ENCODE measurements at regions of chr14 and their contacts with region 1.

Region 1: GRCh38 chr14:39368261-39368959 is 63.8 kb downstream of the FBXO33 start:
- DNase-seq: peak; percentile 61
- H3K4me3 ChIP-seq: no peak overlapping the region
- H3K27ac ChIP-seq: no peak overlapping the region
- H3K4me1 ChIP-seq: no peaks in the 10 kb centered on the region
- H3K27me3 ChIP-seq: no peaks in the 10 kb centered on the region
- CTCF ChIP-seq: peak; percentile 36 to 42
- POLR2A ChIP-seq: no peak

Region 2: DNA sequence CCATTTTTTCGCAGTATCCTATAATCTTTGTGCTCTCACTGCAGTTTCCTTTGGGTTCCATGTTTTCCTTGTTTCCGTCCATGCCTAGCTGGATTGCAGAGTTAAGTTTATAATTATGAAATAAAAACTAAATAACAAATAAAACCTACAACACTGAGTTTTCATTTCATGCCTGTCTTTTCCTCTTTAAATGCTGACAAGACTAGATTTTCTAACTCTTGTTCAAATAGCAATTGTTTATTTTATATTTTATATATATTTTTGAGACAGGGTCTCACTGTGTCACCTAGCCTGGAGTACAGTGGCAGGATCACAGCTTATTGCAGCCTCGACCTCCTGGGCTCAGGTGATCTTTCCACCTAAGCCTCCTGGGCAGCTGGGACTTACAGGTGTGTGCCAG is 259.6 kb before region 1 on chr14:
- CTCF ChIA-PET with region 1: interaction called, 18 read pairs
- POLR2A ChIA-PET with region 1: no interaction called
- dilution Hi-C with region 1: no loop called
- intact Hi-C with region 1: loop called (anchors 1 kb)
- DNase-seq: no peak
- H3K4me3 ChIP-seq: no peak overlapping the region
- H3K27ac ChIP-seq: no peak overlapping the region
- H3K4me1 ChIP-seq: peaks cover 6% of the 10 kb centered on the region
- H3K27me3 ChIP-seq: no peaks in the 10 kb centered on the region
- CTCF ChIP-seq: no peak
- POLR2A ChIP-seq: no peak

Region 3: DNA sequence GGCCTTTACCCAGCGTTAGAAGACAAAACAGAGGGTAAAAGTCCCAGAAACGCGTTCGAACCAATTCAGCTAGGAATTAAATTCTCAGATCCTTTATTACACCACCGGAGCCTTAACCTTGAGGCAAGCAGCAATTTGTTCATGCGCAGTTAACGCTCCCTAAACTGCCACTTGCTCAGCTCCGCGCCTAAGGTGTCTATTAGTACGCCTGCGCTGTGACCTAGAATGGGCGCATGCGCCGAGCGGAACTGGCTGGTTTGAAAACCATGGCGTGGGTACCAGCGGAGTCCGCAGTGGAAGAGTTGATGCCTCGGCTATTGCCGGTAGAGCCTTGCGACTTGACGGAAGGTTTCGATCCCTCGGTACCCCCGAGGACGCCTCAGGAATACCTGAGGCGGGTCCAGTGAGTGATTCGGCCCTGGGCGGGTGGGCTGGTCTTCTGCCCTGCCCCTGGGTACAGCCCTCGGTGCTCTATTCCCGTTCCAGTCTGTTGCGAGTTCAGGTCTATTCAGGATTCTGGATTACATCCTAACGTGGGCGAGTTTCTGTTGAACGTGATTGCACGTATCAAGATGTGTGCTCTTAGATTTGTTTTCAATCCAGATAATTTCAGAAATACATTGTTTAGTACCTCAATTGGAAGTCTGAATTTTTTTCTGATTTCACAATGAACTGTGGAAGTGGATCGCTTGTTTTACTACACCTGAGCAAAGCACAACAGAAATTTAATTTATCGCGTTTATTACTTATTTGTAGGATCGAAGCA is 254.2 kb before region 1 on chr14 and contains the start of gene GEMIN2:
- CTCF ChIA-PET with region 1: interaction called, 13 read pairs
- POLR2A ChIA-PET with region 1: no interaction called
- dilution Hi-C with region 1: no loop called
- intact Hi-C with region 1: no loop called
- DNase-seq: peak; percentile 97
- H3K4me3 ChIP-seq: peak within 1 kb of the TSS; percentile 48 to 92 (median 61)
- H3K27ac ChIP-seq: peak within 1 kb of the TSS; percentile 7
- H3K4me1 ChIP-seq: peaks cover 11% of the 10 kb centered on the region
- H3K27me3 ChIP-seq: no peaks in the 10 kb centered on the region
- CTCF ChIP-seq: no peak
- POLR2A ChIP-seq: peak; percentile 83
- total RNA-seq, gene GEMIN2: 19.5 and 20.0 TPM in 2 replicates

Region 4: GRCh38 chr14:39174560-39175444 is 193.6 kb before region 1 on chr14 and contains the start of gene PNN:
- CTCF ChIA-PET with region 1: interaction called, 4 read pairs
- POLR2A ChIA-PET with region 1: no interaction called
- dilution Hi-C with region 1: no loop called
- intact Hi-C with region 1: loop called (anchors 5 kb)
- DNase-seq: peak; percentile 100
- H3K4me3 ChIP-seq: peak within 1 kb of the TSS; percentile 69 to 92 (median 92)
- H3K27ac ChIP-seq: peak within 1 kb of the TSS; percentile 87
- H3K4me1 ChIP-seq: peaks cover 43% of the 10 kb centered on the region
- H3K27me3 ChIP-seq: no peaks in the 10 kb centered on the region
- CTCF ChIP-seq: no peak
- POLR2A ChIP-seq: peak; percentile 83
- total RNA-seq, gene PNN: 79.4 and 83.5 TPM in 2 replicates

Region 5: GRCh38 chr14:39232554-39233415 is 135.6 kb before region 1 on chr14:
- CTCF ChIA-PET with region 1: interaction called, 9 read pairs
- POLR2A ChIA-PET with region 1: no interaction called
- dilution Hi-C with region 1: no loop called
- intact Hi-C with region 1: loop called (anchors 1 kb)
- DNase-seq: no peak
- H3K4me3 ChIP-seq: no peak overlapping the region
- H3K27ac ChIP-seq: no peak overlapping the region
- H3K4me1 ChIP-seq: no peaks in the 10 kb centered on the region
- H3K27me3 ChIP-seq: no peaks in the 10 kb centered on the region
- CTCF ChIP-seq: no peak
- POLR2A ChIP-seq: no peak

Region 6: DNA sequence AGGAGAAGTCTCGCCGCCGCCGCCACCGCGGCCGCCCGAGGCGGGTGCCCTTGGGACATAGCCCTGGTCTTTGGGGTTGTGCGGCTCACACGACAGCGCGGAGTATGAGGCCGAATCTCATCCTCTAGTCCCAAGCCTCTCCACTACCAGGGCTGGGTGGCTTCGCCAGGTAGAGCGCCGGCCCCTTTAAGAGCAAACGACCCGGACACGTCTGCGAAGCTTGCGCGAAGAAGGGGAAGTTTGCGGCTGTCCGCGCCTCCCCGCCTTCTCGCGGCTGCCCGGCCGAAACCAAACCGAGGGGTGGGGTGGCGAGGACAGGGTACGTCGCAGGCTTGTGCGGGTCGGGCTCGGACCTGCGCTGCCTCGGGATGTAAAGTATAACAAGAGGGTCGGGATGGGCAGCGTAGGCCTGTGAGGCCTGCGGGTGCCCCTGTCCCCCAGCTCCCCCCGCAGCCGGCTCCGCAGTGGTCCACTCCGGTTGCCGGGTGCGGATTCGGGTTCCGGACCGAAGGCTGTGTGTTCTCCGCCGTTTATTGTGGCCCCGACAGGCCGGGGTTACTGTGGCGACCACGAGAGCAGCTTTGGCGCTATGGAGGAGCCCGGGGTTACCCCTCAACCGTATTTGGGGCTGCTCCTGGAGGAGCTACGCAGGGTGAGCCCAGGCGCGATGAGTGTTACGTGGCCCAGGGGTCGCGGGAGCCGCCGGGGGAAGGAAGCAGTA is 101.4 kb before region 1 on chr14:
- CTCF ChIA-PET with region 1: no interaction called
- POLR2A ChIA-PET with region 1: no interaction called
- dilution Hi-C with region 1: no loop called
- intact Hi-C with region 1: loop called (anchors 2 kb)
- DNase-seq: peak; percentile 86
- H3K4me3 ChIP-seq: peak overlapping the region; percentile 50 to 92 (median 84)
- H3K27ac ChIP-seq: peak overlapping the region; percentile 92
- H3K4me1 ChIP-seq: peaks cover 18% of the 10 kb centered on the region
- H3K27me3 ChIP-seq: no peaks in the 10 kb centered on the region
- CTCF ChIP-seq: no peak
- POLR2A ChIP-seq: peak; percentile 71

Region 7: DNA sequence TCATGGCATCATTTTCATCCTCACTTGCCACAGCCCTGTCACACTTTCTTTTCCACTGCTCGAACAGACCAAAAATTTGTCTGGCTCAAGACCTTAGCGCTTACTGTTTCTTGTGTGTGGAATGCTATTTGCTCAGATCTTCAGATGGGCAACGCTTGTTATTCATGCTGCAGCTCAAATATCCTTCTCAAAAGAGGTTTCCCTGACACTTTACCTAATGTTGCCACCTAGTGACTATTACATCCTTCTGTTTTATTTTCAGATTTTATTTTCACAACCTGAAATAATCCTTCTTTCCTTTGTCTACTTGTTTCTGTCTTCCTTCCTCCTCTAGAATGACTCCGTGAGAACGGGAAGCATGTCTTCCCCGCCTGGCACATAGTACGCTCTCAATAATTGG is 58.2 kb after region 1 on chr14:
- CTCF ChIA-PET with region 1: interaction called, 14 read pairs
- POLR2A ChIA-PET with region 1: no interaction called
- dilution Hi-C with region 1: no loop called
- intact Hi-C with region 1: no loop called
- DNase-seq: peak; percentile 77
- H3K4me3 ChIP-seq: peak overlapping the region in 1 of 3 experiments; percentile 42
- H3K27ac ChIP-seq: no peak overlapping the region
- H3K4me1 ChIP-seq: peaks cover 31% of the 10 kb centered on the region
- H3K27me3 ChIP-seq: no peaks in the 10 kb centered on the region
- CTCF ChIP-seq: peak in 1 of 2 donors; percentile 3
- POLR2A ChIP-seq: no peak

Measured in endothelial cell of umbilical vein (primary cell).